Sigmoid colon (tissue), 7 donors: ENCODE measurements at regions of chr14 and their contacts with region 1.

Region 1: GRCh38 chr14:52906071-52906601 is 44.7 kb downstream of the FERMT2 start:
- DNase-seq: no peak
- H3K4me3 ChIP-seq: no peak overlapping the region
- H3K27ac ChIP-seq: peak overlapping the region; percentile 53 to 71 (median 64)
- H3K4me1 ChIP-seq: peaks cover 0 to 73% (median 56%) of the 10 kb centered on the region in 4 donors
- H3K27me3 ChIP-seq: no peaks in the 10 kb centered on the region
- CTCF ChIP-seq: no peak
- EP300 ChIP-seq: no peak
- POLR2A ChIP-seq: no peak

Region 2: GRCh38 chr14:52609445-52610044 is 296.6 kb before region 1 on chr14:
- intact Hi-C with region 1: no loop called
- DNase-seq: no peak
- H3K4me3 ChIP-seq: no peak overlapping the region
- H3K27ac ChIP-seq: no peak overlapping the region
- H3K4me1 ChIP-seq: no peaks in the 10 kb centered on the region
- H3K27me3 ChIP-seq: no peaks in the 10 kb centered on the region
- CTCF ChIP-seq: no peak
- EP300 ChIP-seq: no peak
- POLR2A ChIP-seq: no peak

Region 3: GRCh38 chr14:52895000-52895399 is 11.1 kb before region 1 on chr14:
- intact Hi-C with region 1: no loop called
- DNase-seq: no peak
- H3K4me3 ChIP-seq: no peak overlapping the region
- H3K27ac ChIP-seq: peak overlapping the region in 1 of 4 donors; percentile 9
- H3K4me1 ChIP-seq: peaks cover 0 to 58% (median 35%) of the 10 kb centered on the region in 4 donors
- H3K27me3 ChIP-seq: no peaks in the 10 kb centered on the region
- CTCF ChIP-seq: no peak
- EP300 ChIP-seq: no peak
- POLR2A ChIP-seq: no peak

Region 4: GRCh38 chr14:52936437-52936836 is 30.3 kb after region 1 on chr14:
- intact Hi-C with region 1: loop called (anchors 5 kb)
- DNase-seq: no peak
- H3K4me3 ChIP-seq: no peak overlapping the region
- H3K27ac ChIP-seq: peak overlapping the region in 2 of 4 donors; percentile 52 to 63
- H3K4me1 ChIP-seq: peaks cover 0 to 99% (median 90%) of the 10 kb centered on the region in 4 donors
- H3K27me3 ChIP-seq: no peaks in the 10 kb centered on the region
- CTCF ChIP-seq: no peak
- EP300 ChIP-seq: no peak
- POLR2A ChIP-seq: no peak